ENCODE measurements at regions of chr11 and their contacts with region 1.

Region 1: DNA sequence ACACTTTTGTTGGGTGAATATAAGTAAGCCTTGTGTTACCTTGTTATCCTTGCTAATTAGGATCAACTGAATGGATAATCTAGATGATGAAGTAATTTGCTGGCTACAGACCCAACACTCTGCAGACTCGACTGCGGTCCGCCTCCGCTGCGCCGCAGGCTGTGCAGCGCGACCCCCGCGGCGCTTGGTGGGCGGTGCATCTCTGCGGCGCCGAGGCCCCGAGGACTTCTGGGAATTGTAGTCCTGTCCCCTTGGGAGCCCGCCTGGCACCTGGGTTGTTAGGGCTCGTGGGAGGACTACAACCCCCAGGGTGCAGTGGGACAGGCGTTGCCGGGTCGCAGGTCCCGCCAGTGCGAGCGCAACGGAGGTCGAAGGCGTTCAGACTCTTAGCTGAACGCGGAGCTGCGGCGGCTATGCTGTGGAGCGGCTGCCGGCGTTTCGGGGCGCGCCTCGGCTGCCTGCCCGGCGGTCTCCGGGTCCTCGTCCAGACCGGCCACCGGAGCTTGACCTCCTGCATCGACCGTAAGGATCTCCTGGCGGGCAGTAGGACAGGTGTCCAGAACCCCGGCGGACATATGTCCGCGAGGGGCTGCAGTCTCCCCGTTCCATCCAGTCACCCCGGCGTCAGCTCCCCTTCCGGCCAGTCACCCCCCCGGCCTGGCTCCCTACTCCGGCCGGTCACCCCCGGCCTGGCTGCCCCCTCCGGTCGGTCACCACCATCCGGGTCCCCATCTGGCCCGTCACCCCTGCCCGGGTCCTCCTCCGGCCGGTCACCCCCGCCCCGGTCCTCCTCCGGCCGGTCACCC is at the starts of genes ACAD8 and THYN1:
- DNase-seq: peak; percentile 92
- H3K4me3 ChIP-seq: peak within 1 kb of the TSS; percentile 87 to 94 (median 92)
- H3K27ac ChIP-seq: peak within 1 kb of the TSS; percentile 44
- H3K4me1 ChIP-seq: peaks cover 6% of the 10 kb centered on the region
- H3K27me3 ChIP-seq: no peaks in the 10 kb centered on the region
- CTCF ChIP-seq: peak in 1 of 2 donors; percentile 27
- total RNA-seq, gene ACAD8: 20.8 to 21.0 TPM
- total RNA-seq, gene THYN1: 30.2 to 38.0 TPM

Region 2: GRCh38 chr11:134223836-134224709 is 29.3 kb before region 1 on chr11 and contains the starts of genes NCAPD3 and VPS26B:
- CTCF ChIA-PET with region 1: no interaction called
- dilution Hi-C with region 1: no loop called
- in situ Hi-C with region 1: no loop called
- intact Hi-C with region 1: loop called (anchors 2 kb)
- DNase-seq: peak; percentile 95
- H3K4me3 ChIP-seq: peak within 1 kb of the TSS; percentile 85 to 90 (median 89)
- H3K27ac ChIP-seq: peak within 1 kb of the TSS; percentile 55
- H3K4me1 ChIP-seq: peaks cover 20% of the 10 kb centered on the region
- H3K27me3 ChIP-seq: no peaks in the 10 kb centered on the region
- CTCF ChIP-seq: no peak
- total RNA-seq, gene NCAPD3: 16.2 to 36.9 TPM
- total RNA-seq, gene VPS26B: 46.0 to 46.6 TPM